BJ (cell line): ENCODE measurements at regions of chr10 and their contacts with region 1.

Region 1: DNA sequence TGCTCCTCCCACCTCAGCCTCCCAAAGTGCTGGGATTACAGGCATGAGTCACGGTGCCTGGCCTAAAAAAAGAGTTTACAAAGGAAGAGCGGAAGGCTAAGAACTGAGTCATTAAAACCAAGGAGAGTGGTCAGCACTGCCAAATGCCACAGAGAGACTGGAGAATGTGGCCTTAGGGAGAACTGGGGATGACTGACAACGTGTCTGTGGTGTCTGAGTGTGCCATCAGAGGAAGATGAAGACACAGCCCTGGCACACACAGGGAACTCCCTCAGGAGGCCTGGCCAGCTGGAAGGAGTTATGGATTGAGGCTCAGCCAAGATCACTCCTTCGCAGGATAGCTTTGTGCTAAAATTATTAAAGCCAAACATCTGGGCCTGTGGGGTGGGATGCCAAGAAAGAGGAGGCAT is 3.9 kb upstream of the INA start:
- DNase-seq: peak; percentile 100
- H3K4me3 ChIP-seq: no peak overlapping the region
- H3K27me3 ChIP-seq: peaks cover 11% of the 10 kb centered on the region
- CTCF ChIP-seq: no peak

Region 2: DNA sequence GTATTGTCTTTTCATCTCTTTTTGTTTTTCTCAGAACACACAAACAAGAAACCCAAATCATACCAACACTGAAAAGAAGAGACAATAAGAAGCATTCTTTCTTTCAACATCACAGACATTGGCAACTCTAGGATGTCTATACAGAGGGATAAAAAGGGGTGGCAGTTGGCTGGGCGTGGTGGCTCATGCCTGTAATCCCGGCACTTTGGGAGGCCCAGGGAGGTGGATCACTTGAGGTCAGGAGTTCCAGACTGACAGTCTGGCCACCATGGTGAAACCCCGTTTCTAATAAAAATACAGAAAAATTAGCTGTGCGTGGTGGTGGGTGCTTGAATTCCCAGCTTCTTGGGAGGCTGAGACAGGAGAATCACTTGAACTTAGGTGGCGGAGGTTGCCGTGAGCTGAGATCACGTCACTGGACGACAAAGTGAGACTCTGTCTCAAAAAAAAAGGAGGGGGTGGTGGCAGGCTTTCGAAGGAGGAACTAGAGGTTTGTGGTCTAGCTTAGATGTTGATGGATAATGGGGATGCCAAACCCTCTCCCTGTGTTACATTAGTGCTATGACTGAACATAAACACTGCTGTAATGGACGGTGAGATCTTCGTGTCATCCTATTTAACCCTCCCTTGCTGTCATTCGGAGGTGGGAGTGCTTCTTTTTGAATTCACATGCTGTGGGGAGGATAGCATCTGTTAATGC is 345.6 kb before region 1 on chr10:
- CTCF ChIA-PET with region 1: no interaction called
- POLR2A ChIA-PET with region 1: interaction called, 10 read pairs
- DNase-seq: no peak
- H3K4me3 ChIP-seq: no peak overlapping the region
- H3K27me3 ChIP-seq: no peaks in the 10 kb centered on the region
- CTCF ChIP-seq: no peak

Region 3: DNA sequence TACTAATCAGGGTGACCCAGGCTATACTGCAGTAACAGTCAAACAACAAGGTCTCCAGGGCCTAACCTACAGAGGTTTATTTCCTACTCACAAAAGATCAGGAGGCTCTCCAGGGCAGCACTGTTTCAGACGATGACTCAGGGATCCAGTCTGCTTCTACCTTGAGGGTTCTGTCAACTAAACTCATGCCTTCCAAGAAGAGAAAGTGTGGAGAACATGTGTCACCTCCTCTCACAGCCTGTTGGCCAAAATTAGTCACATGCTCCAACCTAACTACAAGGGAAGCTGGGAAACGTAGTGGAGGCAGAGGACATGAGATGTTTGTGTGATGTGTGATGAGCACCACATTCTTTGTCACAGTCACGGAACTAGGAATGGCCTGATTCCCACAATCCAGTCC is 10.8 kb before region 1 on chr10:
- CTCF ChIA-PET with region 1: no interaction called
- POLR2A ChIA-PET with region 1: no interaction called
- DNase-seq: no peak
- H3K4me3 ChIP-seq: no peak overlapping the region
- H3K27me3 ChIP-seq: no peaks in the 10 kb centered on the region
- CTCF ChIP-seq: no peak

Region 4: DNA sequence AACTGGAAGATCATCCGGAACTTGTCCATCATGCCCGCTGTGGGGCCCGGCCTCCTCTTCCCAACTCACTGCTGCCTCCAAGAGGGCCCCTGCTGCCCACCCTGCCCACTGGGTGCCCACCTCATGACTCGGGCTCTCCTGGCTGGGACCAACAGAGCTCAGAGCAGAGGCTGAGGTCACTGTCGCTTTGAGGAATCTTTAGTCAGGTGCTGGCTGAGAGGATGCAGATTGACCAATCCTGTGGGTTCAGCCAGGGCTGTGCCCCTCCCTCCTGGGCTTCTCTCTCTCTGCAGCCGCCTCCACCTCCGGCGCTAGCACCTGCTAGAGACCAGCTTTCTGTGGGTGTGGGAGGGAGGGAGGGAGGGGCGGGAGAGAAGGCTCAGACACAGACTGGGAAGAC is 185.7 kb after region 1 on chr10 and contains the start of gene CALHM1:
- CTCF ChIA-PET with region 1: no interaction called
- POLR2A ChIA-PET with region 1: no interaction called
- DNase-seq: no peak
- H3K4me3 ChIP-seq: no peak within 1 kb of the TSS
- H3K27me3 ChIP-seq: no peaks in the 10 kb centered on the region
- CTCF ChIP-seq: no peak
- polyA plus RNA-seq, gene CALHM1: not detected in 2 replicates